Posterior vena cava (tissue), 2 donors: ENCODE measurements at regions of chr4 and their contacts with region 1.

Region 1: GRCh38 chr4:156493858-156494257 is 477.7 kb downstream of the PDGFC start:
- DNase-seq: no peak

Region 2: DNA sequence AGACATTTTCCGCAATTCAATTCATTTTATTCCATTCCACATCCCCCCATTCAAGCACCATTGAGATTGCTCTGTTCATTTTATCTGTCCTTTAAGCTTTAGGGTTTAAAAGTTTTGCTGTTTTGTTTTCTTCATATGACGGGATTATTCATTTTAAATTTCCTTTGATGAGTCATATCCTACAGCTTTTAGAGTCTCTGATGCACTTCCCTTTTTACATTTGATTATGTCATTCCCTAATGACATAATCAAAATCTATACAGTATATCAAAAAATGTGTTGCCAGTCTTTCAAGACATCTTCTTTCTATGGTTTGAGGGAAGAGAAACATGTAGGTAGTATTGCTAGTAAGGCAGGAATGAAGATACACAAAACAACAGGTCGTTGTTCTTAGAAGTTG is 21.4 kb after region 1 on chr4:
- intact Hi-C with region 1: loop called in 1 of 2 experiments (anchors 1 kb)
- DNase-seq: no peak